GM23248 (cell line): ENCODE measurements at regions of chr10 and their contacts with region 1.

Region 1: GRCh38 chr10:117541909-117542705 is 439 bp upstream of the EMX2 start:
- DNase-seq: peak; percentile 99
- H3K4me3 ChIP-seq: peak overlapping the region; percentile 95
- H3K27ac ChIP-seq: peak overlapping the region; percentile 99
- H3K4me1 ChIP-seq: peaks cover 21% of the 10 kb centered on the region; the same call in 1 of the 2 replicates
- H3K27me3 ChIP-seq: no peaks in the 10 kb centered on the region

Region 2: GRCh38 chr10:118046395-118047156 is 504.5 kb after region 1 on chr10 and contains the start of gene RAB11FIP2:
- in situ Hi-C with region 1: loop called (anchors 10 kb)
- DNase-seq: peak; percentile 97
- H3K4me3 ChIP-seq: peak within 1 kb of the TSS; percentile 96
- H3K27ac ChIP-seq: peak within 1 kb of the TSS; percentile 87
- H3K4me1 ChIP-seq: peaks cover 35% of the 10 kb centered on the region
- H3K27me3 ChIP-seq: no peaks in the 10 kb centered on the region
- total RNA-seq, gene RAB11FIP2: 13.0 and 16.4 TPM in 2 replicates

Region 3: GRCh38 chr10:118241229-118242137 is 699.4 kb after region 1 on chr10:
- in situ Hi-C with region 1: loop called (anchors 10 kb)
- DNase-seq: peak; percentile 82
- H3K4me3 ChIP-seq: no peak overlapping the region
- H3K27ac ChIP-seq: no peak overlapping the region
- H3K4me1 ChIP-seq: peaks cover 14% of the 10 kb centered on the region
- H3K27me3 ChIP-seq: peaks cover 16% of the 10 kb centered on the region